ENCODE measurements at regions of chr12 and their contacts with region 1.

Region 1: GRCh38 chr12:5988659-5989116 is 43.6 kb upstream of the ANO2 start:
- DNase-seq: peak; percentile 43
- H3K4me3 ChIP-seq: no peak overlapping the region
- H3K27ac ChIP-seq: no peak overlapping the region
- H3K27me3 ChIP-seq: peaks cover 17% of the 10 kb centered on the region
- CTCF ChIP-seq: peak; percentile 99

Region 2: GRCh38 chr12:5973461-5974130 is 15.1 kb before region 1 on chr12:
- CTCF ChIA-PET with region 1: interaction called, 37 read pairs
- POLR2A ChIA-PET with region 1: no interaction called
- DNase-seq: no peak
- H3K4me3 ChIP-seq: no peak overlapping the region
- H3K27ac ChIP-seq: no peak overlapping the region
- H3K27me3 ChIP-seq: peaks cover 41% of the 10 kb centered on the region
- CTCF ChIP-seq: no peak

Region 3: GRCh38 chr12:6039894-6040568 is 51.3 kb after region 1 on chr12:
- CTCF ChIA-PET with region 1: interaction called, 295 read pairs
- POLR2A ChIA-PET with region 1: no interaction called
- DNase-seq: peak; percentile 49
- H3K4me3 ChIP-seq: no peak overlapping the region
- H3K27ac ChIP-seq: no peak overlapping the region
- H3K27me3 ChIP-seq: no peaks in the 10 kb centered on the region
- CTCF ChIP-seq: peak; percentile 97

Region 4: DNA sequence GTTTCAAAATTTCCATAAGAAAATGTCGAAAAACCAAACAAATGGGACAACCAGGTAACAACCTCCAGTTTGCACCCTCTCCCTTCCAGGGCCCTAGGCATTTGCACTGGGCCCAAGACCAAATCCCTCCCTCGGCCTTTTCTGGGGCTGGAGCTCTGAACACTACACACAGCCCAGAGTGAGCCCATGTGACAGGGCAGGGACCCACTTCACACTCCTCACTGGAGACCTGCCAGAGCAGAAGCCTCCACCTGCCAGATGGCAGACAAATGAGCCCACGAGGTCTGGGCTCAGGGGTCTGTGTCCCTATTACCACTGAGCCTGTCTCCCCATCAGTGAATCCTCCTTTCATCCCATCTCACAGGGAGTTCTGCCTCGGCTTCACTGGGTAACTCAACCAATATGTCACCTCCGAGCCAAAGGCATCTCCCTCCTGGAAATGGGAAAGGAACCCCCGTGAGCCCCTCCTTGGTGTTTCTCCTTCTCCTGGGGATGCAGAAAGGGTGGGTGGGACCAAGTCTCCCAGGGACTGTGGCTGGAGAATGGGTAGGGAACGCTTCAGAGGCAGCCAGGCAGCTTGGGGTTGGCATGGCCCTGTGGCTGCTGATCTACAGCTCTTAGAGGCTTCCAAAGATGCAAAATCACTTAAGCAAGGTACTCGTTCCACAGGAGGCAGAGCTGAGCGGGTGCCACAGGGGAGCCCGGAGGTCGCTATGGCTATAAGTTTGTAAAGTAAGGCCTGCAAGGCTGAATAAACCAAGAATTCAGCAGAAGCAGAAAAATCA is 125.2 kb after region 1 on chr12:
- CTCF ChIA-PET with region 1: no interaction called
- POLR2A ChIA-PET with region 1: no interaction called
- DNase-seq: no peak
- H3K4me3 ChIP-seq: no peak overlapping the region
- H3K27ac ChIP-seq: no peak overlapping the region
- H3K27me3 ChIP-seq: no peaks in the 10 kb centered on the region
- CTCF ChIP-seq: no peak

Region 5: GRCh38 chr12:6218482-6218881 is 229.8 kb after region 1 on chr12:
- CTCF ChIA-PET with region 1: no interaction called
- POLR2A ChIA-PET with region 1: no interaction called
- DNase-seq: no peak
- H3K4me3 ChIP-seq: no peak overlapping the region
- H3K27ac ChIP-seq: no peak overlapping the region
- H3K27me3 ChIP-seq: no peaks in the 10 kb centered on the region
- CTCF ChIP-seq: no peak

Region 6: GRCh38 chr12:6285063-6285477 is 296.4 kb after region 1 on chr12:
- CTCF ChIA-PET with region 1: interaction called, 183 read pairs
- POLR2A ChIA-PET with region 1: interaction called, 3 read pairs
- DNase-seq: no peak
- H3K4me3 ChIP-seq: no peak overlapping the region
- H3K27ac ChIP-seq: peak overlapping the region; percentile 52
- H3K27me3 ChIP-seq: no peaks in the 10 kb centered on the region
- CTCF ChIP-seq: peak; percentile 91